Naive thymus-derived CD4-positive, alpha-beta T cell (primary cell): ENCODE measurements at regions of chr10 and their contacts with region 1.

Region 1: GRCh38 chr10:9051323-9051974 is 997.0 kb downstream of the GATA3 start:
- DNase-seq: no peak
- ATAC-seq: no peak
- H3K4me3 ChIP-seq: no peak overlapping the region
- H3K4me3 Mint-ChIP-seq: no peak overlapping the region
- H3K27ac ChIP-seq: no peak overlapping the region
- H3K27ac Mint-ChIP-seq: peak overlapping the region in 4 of 9 donors; percentile 5 to 54 (median 22)
- H3K4me1 ChIP-seq: peaks cover 0 to 11% of the 10 kb centered on the region in 2 donors
- H3K4me1 Mint-ChIP-seq: peaks cover 6 to 33% (median 18%) of the 10 kb centered on the region in 7 donors
- H3K27me3 ChIP-seq: no peaks in the 10 kb centered on the region
- H3K27me3 Mint-ChIP-seq: no peaks in the 10 kb centered on the region

Region 2: DNA sequence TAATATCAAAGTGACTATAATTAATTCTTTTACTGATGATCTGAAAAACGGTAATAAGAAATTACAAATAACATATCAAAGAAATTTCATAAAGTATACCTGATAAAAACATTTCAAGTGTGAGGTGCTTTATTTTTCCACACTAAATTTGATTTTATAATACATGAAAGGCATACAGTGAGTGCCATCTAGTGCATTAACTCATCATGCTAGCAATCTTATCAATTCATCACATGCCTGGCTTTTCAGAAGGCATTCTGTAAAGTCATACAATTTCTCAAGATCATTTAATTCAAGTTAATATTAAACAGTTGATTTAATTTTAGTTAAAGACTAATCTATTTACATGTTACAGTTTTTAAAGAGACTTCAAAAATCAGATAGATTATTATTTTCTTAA is 24.0 kb after region 1 on chr10:
- CTCF ChIA-PET with region 1: interaction called, 11 read pairs
- POLR2A ChIA-PET with region 1: no interaction called
- intact Hi-C with region 1: no loop called
- DNase-seq: no peak
- ATAC-seq: no peak
- H3K4me3 ChIP-seq: no peak overlapping the region
- H3K4me3 Mint-ChIP-seq: no peak overlapping the region
- H3K27ac ChIP-seq: no peak overlapping the region
- H3K27ac Mint-ChIP-seq: no peak overlapping the region
- H3K4me1 ChIP-seq: no peaks in the 10 kb centered on the region
- H3K4me1 Mint-ChIP-seq: peaks cover 0 to 5% (median 0%) of the 10 kb centered on the region in 7 donors
- H3K27me3 ChIP-seq: no peaks in the 10 kb centered on the region
- H3K27me3 Mint-ChIP-seq: peaks cover 0 to 6% (median 4%) of the 10 kb centered on the region in 5 donors

Region 3: DNA sequence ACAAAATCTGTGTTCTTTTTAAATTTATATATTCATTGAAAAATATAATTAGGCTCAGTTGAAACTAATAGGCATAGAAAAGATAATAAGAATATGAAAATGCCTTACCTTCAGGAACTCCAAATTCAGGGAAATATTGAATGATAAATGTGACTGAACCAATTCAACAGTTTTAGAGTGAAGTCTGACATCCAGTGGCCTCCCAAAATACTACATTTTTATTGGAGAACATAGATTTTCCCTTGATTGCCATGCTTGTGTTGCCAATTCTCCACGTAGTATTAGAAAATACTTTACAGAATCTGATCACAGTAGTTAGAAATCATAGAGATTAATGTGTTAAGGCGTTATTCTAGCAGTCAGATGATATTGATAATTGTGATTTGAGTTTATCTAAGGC is 249.7 kb after region 1 on chr10:
- CTCF ChIA-PET with region 1: no interaction called
- POLR2A ChIA-PET with region 1: no interaction called
- intact Hi-C with region 1: no loop called
- DNase-seq: no peak
- ATAC-seq: no peak
- H3K4me3 ChIP-seq: no peak overlapping the region
- H3K4me3 Mint-ChIP-seq: no peak overlapping the region
- H3K27ac ChIP-seq: no peak overlapping the region
- H3K27ac Mint-ChIP-seq: no peak overlapping the region
- H3K4me1 ChIP-seq: no peaks in the 10 kb centered on the region
- H3K4me1 Mint-ChIP-seq: peaks cover 0 to 3% (median 0%) of the 10 kb centered on the region in 7 donors
- H3K27me3 ChIP-seq: no peaks in the 10 kb centered on the region
- H3K27me3 Mint-ChIP-seq: peaks cover 0 to 5% (median 3%) of the 10 kb centered on the region in 5 donors